Activated B cell treated with CpG ODN at 0.5 μM for 24 hours (primary cell): ENCODE measurements at regions of chr1 and their contacts with region 1.

Region 1: DNA sequence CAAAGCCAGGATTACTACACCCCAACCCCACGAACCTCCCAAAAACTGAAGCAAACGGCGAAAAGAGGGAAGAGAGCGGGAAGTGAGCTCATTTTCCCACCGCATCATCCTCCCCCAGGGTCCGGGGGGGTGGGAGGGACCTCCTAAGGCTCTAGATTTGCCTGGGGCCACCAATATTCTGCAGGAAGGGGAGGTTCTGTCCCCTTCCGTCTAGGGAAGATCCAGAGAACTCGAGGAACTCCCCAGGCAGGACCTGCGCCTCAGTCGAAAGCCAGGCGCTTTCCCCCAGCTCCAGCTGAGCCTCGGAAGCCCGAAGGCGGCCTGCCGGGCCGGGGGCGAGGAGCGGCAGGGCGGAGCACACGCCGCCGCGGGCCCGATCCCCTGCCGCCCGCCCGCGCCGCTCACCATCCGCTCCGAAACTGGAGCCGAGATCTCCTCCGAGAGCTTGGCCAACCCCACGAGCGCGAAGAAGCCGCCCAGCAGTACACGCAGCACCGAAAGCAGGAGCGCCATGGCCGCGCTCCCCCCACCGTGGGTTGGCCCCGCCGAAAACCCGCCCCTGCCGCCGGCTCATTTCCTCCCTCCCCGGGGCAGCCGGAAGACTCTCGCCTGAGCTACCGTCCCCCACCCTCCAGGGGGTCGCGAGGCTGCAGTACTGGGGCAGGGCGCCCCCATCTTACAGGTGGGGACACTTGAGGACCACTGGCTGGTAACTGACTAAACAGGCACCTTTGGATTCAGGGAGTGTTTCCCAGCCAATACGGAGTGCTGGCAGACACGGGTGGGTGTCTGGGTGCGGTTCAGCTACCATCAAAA is at the start of gene TMEM35B:
- DNase-seq: peak; percentile 74
- ATAC-seq: peak; percentile 87
- H3K4me3 Mint-ChIP-seq: peak within 1 kb of the TSS; percentile 97
- H3K27ac Mint-ChIP-seq: peak within 1 kb of the TSS; percentile 89
- H3K4me1 Mint-ChIP-seq: peaks cover 43% of the 10 kb centered on the region
- H3K27me3 Mint-ChIP-seq: no peaks in the 10 kb centered on the region
- CTCF ChIP-seq: no peak
- total RNA-seq, gene TMEM35B: 16.7 and 20.0 TPM in 2 replicates

Region 2: GRCh38 chr1:34924759-34925555 is 60.0 kb before region 1 on chr1:
- CTCF ChIA-PET with region 1: no interaction called
- POLR2A ChIA-PET with region 1: interaction called, 3 read pairs
- intact Hi-C with region 1: loop called (anchors 5 kb)
- DNase-seq: peak; percentile 32
- ATAC-seq: no peak
- H3K4me3 Mint-ChIP-seq: no peak overlapping the region
- H3K27ac Mint-ChIP-seq: no peak overlapping the region
- H3K4me1 Mint-ChIP-seq: peaks cover 32% of the 10 kb centered on the region
- H3K27me3 Mint-ChIP-seq: peaks cover 28% of the 10 kb centered on the region
- CTCF ChIP-seq: no peak

Region 3: DNA sequence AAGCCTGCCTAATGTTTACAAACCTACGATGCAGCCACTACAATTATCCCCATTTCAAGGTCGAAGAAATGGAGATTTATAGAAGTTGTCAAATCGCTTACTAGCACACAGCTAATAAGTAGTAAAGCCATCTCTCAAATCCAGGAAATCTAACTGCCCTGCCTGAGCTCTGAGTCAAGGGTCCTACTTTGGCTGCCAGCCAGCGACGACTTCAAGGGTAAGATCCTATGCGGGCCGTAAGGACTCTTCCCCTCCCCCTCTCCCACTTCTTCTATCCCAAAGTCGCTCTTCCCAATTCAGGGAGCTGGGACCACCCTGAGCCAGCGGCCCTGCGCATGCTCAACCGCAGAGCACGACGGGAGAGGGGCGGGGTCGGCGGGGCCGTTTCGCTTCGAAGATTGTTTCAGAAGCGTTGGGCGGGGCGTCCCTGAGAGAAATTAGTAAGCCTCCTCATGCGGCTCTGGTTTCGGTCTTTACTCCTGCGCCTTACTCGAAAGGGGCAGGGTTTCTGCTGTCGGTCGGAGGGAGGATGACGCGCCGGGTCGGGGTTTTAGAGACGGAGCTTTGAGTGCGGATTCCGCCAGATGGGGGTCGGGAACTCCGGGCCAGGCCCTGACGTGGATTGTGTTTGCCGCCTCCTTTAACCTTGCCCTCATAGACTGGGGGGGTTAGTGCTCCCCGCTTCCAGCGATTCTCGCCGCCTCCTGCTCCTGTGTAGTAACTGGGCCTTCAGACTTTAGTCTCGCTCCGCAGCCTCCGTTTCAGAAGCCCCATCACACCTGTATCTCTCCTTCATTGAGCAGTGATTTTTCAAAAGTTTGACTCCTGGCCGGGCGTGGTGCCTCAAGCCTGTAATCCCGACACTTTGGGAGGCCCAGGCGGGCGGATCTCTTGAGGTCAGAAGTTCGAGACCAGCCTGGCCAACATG is 94.3 kb after region 1 on chr1 and contains the start of gene ZMYM1:
- CTCF ChIA-PET with region 1: no interaction called
- POLR2A ChIA-PET with region 1: interaction called, 19 read pairs
- intact Hi-C with region 1: loop called (anchors 1 kb)
- DNase-seq: peak; percentile 88
- ATAC-seq: peak; percentile 96
- H3K4me3 Mint-ChIP-seq: peak within 1 kb of the TSS; percentile 95
- H3K27ac Mint-ChIP-seq: peak within 1 kb of the TSS; percentile 98
- H3K4me1 Mint-ChIP-seq: peaks cover 21% of the 10 kb centered on the region
- H3K27me3 Mint-ChIP-seq: peaks cover 4% of the 10 kb centered on the region
- CTCF ChIP-seq: no peak
- total RNA-seq, gene ZMYM1: 7.4 and 9.0 TPM in 2 replicates

Region 4: DNA sequence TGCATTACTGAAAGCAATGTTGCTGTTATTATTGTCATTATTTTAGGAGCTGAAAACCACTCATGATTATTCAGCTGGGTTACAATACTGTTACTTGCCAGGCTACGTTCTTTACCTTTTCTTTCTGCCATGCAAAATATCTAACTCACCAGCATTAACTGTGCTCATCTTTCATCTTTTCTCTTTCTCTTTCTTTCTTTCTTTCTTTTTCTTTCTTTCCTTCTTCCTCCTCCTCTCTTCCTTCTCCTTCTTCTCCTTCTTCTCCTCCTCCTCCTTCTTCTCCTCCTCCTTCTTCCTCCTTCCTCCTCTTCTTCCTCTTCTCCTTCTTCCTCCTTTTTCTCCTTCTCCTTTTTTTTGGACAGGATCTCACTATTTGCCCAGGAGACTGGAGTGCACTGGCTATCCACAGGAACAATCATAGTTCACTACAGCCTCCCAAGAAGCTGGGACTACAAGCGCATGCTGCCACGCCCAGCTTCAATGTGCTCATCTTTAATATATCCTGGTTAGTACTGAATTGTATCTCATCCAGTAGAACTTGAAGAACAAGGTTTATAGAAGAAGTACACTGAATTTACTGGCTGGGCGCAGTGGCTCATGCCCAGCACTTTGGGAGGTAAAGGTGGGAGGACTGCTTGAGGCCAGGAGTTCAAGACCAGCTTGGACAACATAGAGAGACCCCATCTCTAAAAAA is 276.6 kb after region 1 on chr1:
- CTCF ChIA-PET with region 1: no interaction called
- POLR2A ChIA-PET with region 1: no interaction called
- intact Hi-C with region 1: no loop called
- DNase-seq: no peak
- ATAC-seq: no peak
- H3K4me3 Mint-ChIP-seq: no peak overlapping the region
- H3K27ac Mint-ChIP-seq: no peak overlapping the region
- H3K4me1 Mint-ChIP-seq: no peaks in the 10 kb centered on the region
- H3K27me3 Mint-ChIP-seq: peaks cover 18% of the 10 kb centered on the region
- CTCF ChIP-seq: no peak